ENCODE measurements at regions of chr4 and their contacts with region 1.

Region 1: DNA sequence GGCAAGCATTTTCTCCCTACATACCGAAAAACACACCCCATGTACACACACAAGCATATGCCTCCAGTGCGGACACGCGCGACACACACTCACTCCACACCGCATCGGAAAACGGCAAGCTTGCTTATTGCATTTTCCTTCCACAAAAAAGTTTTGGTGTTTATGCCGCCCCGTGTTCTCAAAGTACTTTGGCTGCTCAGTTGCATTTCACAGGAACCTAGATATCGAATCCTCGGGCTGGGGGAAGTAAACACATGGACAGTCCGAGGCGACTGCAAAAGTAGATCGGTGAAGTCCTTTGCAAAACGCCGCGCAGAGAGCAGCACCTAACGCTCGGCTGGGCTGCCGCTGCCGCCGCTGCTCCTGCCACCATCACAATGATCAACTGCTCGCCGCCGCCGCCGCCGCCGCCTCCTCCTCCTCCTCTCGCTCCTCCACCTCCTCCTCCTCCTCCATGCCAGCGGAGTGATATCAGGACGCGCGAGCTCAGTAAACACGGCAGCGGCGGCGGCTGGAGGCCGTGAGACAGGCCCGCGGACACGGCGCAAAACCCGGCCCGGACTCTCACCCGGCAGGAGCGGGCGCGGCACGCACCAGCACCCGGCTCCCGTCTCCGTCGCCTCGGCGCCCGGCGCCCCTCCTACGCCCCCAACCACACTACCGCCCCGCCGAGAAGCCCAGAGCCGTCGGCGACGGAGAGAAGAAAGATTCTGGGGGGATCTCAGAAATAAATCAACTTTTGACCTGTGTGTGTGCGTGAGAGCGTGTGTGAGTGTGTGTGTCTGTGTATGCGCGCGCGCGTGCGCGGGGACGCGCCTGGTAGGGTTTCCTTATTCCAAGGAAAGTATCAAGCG is at the start of gene MAML3:
- DNase-seq: peak; percentile 96
- total RNA-seq, gene MAML3: 4.1 TPM

Region 2: DNA sequence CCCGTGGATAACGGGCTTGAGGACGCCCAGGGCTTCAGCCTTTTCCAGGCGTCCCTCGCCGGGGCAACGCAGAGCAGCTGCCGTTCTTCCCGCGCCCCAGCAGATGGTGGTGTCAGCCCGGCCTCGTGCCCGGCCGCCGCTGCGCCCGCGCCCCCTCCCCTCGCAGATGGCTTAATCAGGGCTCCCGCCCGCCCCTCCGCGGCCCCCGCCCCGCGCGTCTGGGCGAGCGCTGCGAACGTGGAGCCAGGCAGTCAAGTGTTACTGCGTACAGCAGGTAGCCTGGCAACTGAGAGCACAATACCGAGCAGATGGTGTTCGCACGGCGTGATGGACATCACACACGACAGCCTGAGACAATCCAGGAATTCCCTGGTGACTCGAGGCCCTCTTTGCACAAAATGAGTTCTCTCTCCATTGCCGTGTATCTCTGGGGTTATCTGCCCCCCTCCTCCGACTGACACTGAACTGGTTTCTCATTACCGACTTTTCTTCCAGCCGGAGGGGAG is 419.0 kb before region 1 on chr4:
- intact Hi-C with region 1: loop called (anchors 1 kb)
- DNase-seq: peak; percentile 95

Region 3: GRCh38 chr4:139815778-139816601 is 338.0 kb before region 1 on chr4:
- intact Hi-C with region 1: loop called (anchors 5 kb)
- DNase-seq: no peak

Region 4: DNA sequence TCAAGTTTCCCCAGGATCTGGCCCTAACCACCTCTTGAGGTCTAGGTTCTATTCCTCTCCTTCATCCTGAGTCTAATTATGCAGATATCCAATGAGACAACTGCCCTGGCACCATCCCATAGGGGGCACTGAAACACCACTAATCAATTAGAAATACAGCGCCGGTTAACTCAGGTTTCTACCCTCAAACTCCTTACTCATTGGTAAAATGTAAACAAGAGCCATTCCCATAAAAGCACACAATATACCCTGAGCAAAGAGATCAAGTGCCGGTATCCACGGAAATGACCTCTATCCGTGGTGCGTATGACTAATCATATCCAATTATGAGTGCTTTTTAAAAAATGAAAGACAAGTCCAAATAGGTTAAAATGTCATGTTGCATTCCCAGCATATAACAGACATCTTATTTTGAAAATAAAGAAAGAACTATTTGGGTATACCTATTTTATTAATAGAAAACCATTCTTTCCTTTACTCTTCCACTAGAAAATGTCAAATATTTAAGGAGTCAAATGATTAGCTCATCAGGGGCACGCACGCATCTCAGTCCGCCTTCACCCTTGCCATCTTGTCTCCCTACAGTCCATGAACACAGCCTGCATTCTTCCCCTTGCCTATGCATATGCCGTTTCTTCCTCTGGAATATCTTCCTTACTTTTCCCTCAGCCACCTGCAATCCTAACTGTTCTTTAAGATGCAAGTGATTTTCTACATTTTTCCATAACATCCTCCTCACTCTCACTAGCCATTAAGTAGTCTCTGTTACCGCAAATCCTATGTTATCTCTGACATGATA is 141.1 kb before region 1 on chr4:
- intact Hi-C with region 1: loop called (anchors 5 kb)
- DNase-seq: peak; percentile 78

Region 5: DNA sequence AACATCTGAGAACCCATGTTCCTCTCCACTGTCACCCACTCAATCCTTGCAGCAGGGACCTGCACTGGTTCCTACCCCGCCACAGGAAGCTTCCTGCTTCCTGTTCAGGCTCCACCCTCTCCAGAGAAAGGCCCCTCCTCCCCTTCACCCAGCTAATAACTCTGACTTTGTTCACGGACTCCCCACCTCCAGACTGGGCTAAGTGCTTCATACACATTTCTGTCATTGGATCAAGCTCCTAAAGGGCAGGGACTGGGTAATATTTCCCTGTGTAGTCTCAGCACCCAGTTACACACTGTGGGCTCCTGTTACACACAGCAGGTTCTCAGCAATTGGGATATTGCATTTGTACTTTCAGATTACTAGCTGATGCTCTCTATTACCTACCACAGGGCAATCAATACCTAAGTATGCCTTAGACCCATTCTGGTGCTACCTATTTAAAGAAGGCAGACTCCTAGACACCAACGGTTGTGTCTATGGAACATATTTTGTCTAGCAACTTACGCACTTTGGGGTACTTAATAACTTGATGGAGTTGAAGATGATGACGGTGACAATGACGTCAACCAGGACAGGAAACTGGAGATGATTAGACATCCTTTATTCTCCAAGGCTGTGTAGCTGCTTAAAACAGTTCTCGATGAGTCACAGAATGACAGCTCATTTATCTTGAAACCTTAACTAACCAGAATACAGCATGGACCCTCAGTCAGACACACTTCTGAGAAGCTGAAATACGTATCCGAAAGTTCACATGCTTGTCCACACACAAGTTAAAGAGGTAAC is 58.1 kb before region 1 on chr4:
- intact Hi-C with region 1: loop called (anchors 1 kb)
- DNase-seq: peak; percentile 79

Region 6: GRCh38 chr4:140252742-140253555 is 99.0 kb after region 1 on chr4:
- intact Hi-C with region 1: loop called (anchors 1 kb)
- DNase-seq: peak; percentile 92